Naive thymus-derived CD4-positive, alpha-beta T cell (primary cell): ENCODE measurements at regions of chr19 and their contacts with region 1.

Region 1: GRCh38 chr19:52601025-52601973 is 31.2 kb downstream of the ZNF701 start:
- DNase-seq: peak; percentile 84 to 94 (median 91)
- ATAC-seq: peak; percentile 100
- H3K4me3 ChIP-seq: peak overlapping the region; percentile 89
- H3K4me3 Mint-ChIP-seq: peak overlapping the region; percentile 86 to 99 (median 92)
- H3K27ac ChIP-seq: peak overlapping the region; percentile 81
- H3K27ac Mint-ChIP-seq: peak overlapping the region; percentile 63 to 93 (median 81)
- H3K4me1 ChIP-seq: peaks cover 10 to 12% of the 10 kb centered on the region in 2 donors
- H3K4me1 Mint-ChIP-seq: peaks cover 11 to 43% (median 37%) of the 10 kb centered on the region in 7 donors
- H3K27me3 ChIP-seq: no peaks in the 10 kb centered on the region
- H3K27me3 Mint-ChIP-seq: no peaks in the 10 kb centered on the region

Region 2: DNA sequence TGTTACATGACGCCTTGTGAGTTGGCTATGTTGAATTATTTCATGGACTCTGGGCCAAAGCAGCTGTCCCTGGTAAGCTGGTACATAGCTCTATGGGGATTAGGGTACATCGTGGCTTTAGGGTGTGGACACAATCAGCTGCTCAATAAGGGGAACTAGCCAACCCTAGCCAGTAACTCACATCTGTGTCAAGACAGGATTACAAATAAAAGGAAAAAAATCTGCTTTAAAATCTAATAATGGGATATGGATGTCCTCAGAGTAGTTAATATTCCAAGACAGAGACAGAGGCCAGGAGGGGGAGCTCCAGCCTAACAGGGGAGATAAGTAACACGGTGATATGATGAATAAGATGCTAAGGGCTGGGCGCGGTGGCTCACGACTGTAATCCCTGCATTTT is 353.1 kb before region 1 on chr19:
- CTCF ChIA-PET with region 1: no interaction called
- POLR2A ChIA-PET with region 1: no interaction called
- intact Hi-C with region 1: loop called in 1 of 2 experiments (anchors 1 kb)
- DNase-seq: peak; percentile 25 to 62 (median 54)
- ATAC-seq: peak; percentile 78
- H3K4me3 ChIP-seq: no peak overlapping the region
- H3K4me3 Mint-ChIP-seq: no peak overlapping the region
- H3K27ac ChIP-seq: no peak overlapping the region
- H3K27ac Mint-ChIP-seq: no peak overlapping the region
- H3K4me1 ChIP-seq: no peaks in the 10 kb centered on the region
- H3K4me1 Mint-ChIP-seq: peaks cover 0 to 3% (median 0%) of the 10 kb centered on the region in 7 donors
- H3K27me3 ChIP-seq: no peaks in the 10 kb centered on the region
- H3K27me3 Mint-ChIP-seq: no peaks in the 10 kb centered on the region

Region 3: GRCh38 chr19:52535771-52536447 is 65.4 kb before region 1 on chr19:
- CTCF ChIA-PET with region 1: no interaction called
- POLR2A ChIA-PET with region 1: no interaction called
- intact Hi-C with region 1: loop called in 1 of 2 experiments (anchors 2 kb)
- DNase-seq: peak; percentile 60 to 87 (median 82)
- ATAC-seq: peak; percentile 99
- H3K4me3 ChIP-seq: peak overlapping the region; percentile 84
- H3K4me3 Mint-ChIP-seq: peak overlapping the region; percentile 83 to 99 (median 90)
- H3K27ac ChIP-seq: peak overlapping the region; percentile 87
- H3K27ac Mint-ChIP-seq: peak overlapping the region; percentile 69 to 95 (median 87)
- H3K4me1 ChIP-seq: no peaks in the 10 kb centered on the region
- H3K4me1 Mint-ChIP-seq: peaks cover 16 to 44% (median 34%) of the 10 kb centered on the region in 7 donors
- H3K27me3 ChIP-seq: no peaks in the 10 kb centered on the region
- H3K27me3 Mint-ChIP-seq: no peaks in the 10 kb centered on the region

Region 4: DNA sequence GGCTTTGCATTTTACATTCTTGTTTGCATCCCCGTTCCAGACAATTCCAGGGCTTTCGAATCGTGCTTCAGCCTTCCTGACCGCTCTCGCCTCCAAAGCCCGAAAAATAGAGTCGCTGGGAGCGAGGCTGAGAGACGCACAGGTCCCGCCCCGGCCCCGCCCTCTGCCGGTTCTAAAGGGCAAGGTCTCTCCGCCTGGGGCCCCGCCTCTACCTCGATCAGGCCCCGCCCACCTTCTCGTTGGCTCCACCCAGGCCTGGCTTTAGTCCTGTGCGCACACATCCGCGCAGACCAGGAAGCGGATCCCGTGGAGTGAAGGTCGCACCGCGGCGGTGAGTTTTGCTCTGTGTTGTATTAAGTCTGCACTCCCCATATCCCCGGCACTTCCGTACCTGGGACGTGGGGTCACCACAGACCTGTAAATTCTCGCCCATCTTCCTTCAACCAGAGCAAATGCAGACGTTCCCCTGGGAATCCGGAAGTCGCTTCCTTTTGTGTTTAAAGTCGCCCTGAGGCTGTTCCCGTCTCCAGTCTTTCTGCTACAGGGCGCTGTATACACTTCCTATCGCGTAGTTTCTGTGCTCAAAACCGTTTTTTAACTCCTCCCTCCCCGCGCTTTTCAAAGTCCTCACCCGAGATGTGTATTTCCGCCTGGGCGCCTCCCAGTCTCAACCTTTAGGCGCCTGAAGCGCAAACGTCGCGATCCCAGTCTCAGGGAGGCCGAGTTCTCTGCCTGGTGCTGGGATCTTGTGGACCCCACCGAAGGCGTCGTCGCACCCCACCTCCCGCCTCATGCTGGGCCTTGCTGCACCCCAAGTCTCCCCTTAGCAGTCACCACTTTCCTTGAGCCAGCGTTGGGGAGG is 31.1 kb before region 1 on chr19 and contains the start of gene ZNF701:
- CTCF ChIA-PET with region 1: no interaction called
- POLR2A ChIA-PET with region 1: no interaction called
- intact Hi-C with region 1: loop called (anchors 1 kb)
- DNase-seq: peak; percentile 92 to 99 (median 96)
- ATAC-seq: peak; percentile 100
- H3K4me3 ChIP-seq: peak within 1 kb of the TSS; percentile 78
- H3K4me3 Mint-ChIP-seq: peak within 1 kb of the TSS; percentile 88 to 99 (median 94)
- H3K27ac ChIP-seq: peak within 1 kb of the TSS; percentile 78
- H3K27ac Mint-ChIP-seq: peak within 1 kb of the TSS; percentile 92 to 98 (median 95)
- H3K4me1 ChIP-seq: peaks cover 10 to 13% of the 10 kb centered on the region in 2 donors
- H3K4me1 Mint-ChIP-seq: peaks cover 9 to 42% (median 37%) of the 10 kb centered on the region in 7 donors
- H3K27me3 ChIP-seq: no peaks in the 10 kb centered on the region
- H3K27me3 Mint-ChIP-seq: no peaks in the 10 kb centered on the region
- total RNA-seq, gene ZNF701: 11.7 to 43.3 (median 28.3) TPM

Region 5: DNA sequence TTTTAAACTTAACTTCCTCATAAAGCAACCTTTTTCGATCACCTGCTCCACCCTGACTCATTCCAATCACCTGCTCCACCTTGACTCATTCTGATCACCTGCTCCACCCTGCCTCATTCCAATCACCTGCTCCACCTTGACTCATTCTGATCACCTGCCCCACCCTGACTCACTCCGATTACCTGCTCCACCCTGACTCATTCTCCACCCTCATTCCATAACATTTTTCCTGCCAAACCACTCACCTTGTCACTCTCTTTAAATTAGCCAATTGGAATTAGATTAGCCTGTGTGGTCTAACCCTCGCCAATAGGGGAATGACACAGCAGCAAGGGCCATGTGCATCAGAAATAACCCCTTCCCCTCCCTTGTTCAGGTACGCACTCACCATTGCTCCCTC is 68.7 kb after region 1 on chr19:
- CTCF ChIA-PET with region 1: no interaction called
- POLR2A ChIA-PET with region 1: no interaction called
- intact Hi-C with region 1: no loop called
- DNase-seq: no peak
- ATAC-seq: no peak
- H3K4me3 ChIP-seq: no peak overlapping the region
- H3K4me3 Mint-ChIP-seq: no peak overlapping the region
- H3K27ac ChIP-seq: no peak overlapping the region
- H3K27ac Mint-ChIP-seq: peak overlapping the region in 1 of 9 donors; percentile 72
- H3K4me1 ChIP-seq: no peaks in the 10 kb centered on the region
- H3K4me1 Mint-ChIP-seq: peaks cover 6 to 25% (median 12%) of the 10 kb centered on the region in 7 donors
- H3K27me3 ChIP-seq: no peaks in the 10 kb centered on the region
- H3K27me3 Mint-ChIP-seq: no peaks in the 10 kb centered on the region

Region 6: DNA sequence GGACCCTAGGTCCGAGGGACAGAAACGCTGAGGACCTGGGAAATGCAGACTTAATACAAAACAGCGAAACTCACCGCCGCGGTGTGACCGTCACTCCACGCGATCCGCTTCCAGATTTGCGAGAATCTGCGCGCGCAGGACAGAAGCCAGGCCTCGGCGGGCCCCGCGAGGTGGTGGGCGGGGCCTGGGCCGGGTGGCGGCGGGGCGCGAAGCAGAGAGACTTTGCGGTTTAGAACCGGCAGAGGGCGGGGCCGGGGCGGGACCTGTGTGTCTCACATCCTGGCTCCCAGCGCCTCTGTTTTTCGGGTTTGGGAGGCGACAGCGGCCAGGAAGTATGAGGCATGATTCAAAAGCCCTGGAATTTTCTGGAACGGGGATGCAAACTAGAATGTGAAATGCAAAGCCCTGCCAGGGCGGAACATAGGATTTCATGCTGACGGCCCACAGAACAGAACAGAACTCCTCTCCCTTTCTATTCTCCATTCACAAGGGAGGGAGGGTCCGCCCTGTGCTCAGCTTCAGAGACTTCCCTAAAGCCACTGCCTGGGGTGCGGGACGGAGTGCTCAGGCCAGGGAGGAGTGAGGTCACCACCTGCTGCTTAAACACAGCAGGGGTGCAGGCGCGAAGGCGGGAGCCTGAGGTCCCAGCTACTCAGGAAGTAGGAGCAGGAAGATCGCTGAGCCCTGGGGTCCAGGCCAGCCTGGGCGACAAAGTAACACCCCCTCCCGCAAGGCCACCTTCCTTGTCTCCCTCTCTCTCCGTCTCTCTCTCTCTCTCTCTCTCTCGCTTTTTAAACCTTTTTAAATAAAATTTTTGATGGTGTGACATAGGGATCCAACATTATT is 89.3 kb after region 1 on chr19:
- CTCF ChIA-PET with region 1: no interaction called
- POLR2A ChIA-PET with region 1: no interaction called
- intact Hi-C with region 1: loop called in 1 of 2 experiments (anchors 1 kb)
- DNase-seq: peak; percentile 81 to 91 (median 87)
- ATAC-seq: peak; percentile 99
- H3K4me3 ChIP-seq: peak overlapping the region; percentile 80
- H3K4me3 Mint-ChIP-seq: peak overlapping the region; percentile 92 to 99 (median 96)
- H3K27ac ChIP-seq: peak overlapping the region; percentile 85
- H3K27ac Mint-ChIP-seq: peak overlapping the region; percentile 89 to 97 (median 94)
- H3K4me1 ChIP-seq: peaks cover 6 to 9% of the 10 kb centered on the region in 2 donors
- H3K4me1 Mint-ChIP-seq: peaks cover 18 to 33% (median 30%) of the 10 kb centered on the region in 7 donors
- H3K27me3 ChIP-seq: no peaks in the 10 kb centered on the region
- H3K27me3 Mint-ChIP-seq: no peaks in the 10 kb centered on the region

Region 7: GRCh38 chr19:52748336-52748950 is 147.1 kb after region 1 on chr19:
- CTCF ChIA-PET with region 1: no interaction called
- POLR2A ChIA-PET with region 1: interaction called, 3 read pairs
- intact Hi-C with region 1: loop called in 1 of 2 experiments (anchors 5 kb)
- DNase-seq: peak in 7 of 9 donors; percentile 18 to 43 (median 35)
- ATAC-seq: no peak
- H3K4me3 ChIP-seq: no peak overlapping the region
- H3K4me3 Mint-ChIP-seq: no peak overlapping the region
- H3K27ac ChIP-seq: no peak overlapping the region
- H3K27ac Mint-ChIP-seq: no peak overlapping the region
- H3K4me1 ChIP-seq: no peaks in the 10 kb centered on the region
- H3K4me1 Mint-ChIP-seq: peaks cover 0 to 13% (median 6%) of the 10 kb centered on the region in 7 donors
- H3K27me3 ChIP-seq: no peaks in the 10 kb centered on the region
- H3K27me3 Mint-ChIP-seq: no peaks in the 10 kb centered on the region